ENCODE measurements at regions of chr4 and their contacts with region 1.

Region 1: GRCh38 chr4:10403633-10404445 is 53.4 kb downstream of the ZNF518B start:
- DNase-seq: peak in 2 of 9 experiments; percentile 29 to 43
- ATAC-seq: no peak
- H3K4me3 ChIP-seq: no peak overlapping the region
- H3K4me3 Mint-ChIP-seq: no peak overlapping the region
- H3K27ac ChIP-seq: no peak overlapping the region
- H3K27ac Mint-ChIP-seq: no peak overlapping the region
- H3K4me1 ChIP-seq: no peaks in the 10 kb centered on the region
- H3K4me1 Mint-ChIP-seq: no peaks in the 10 kb centered on the region
- H3K27me3 ChIP-seq: no peaks in the 10 kb centered on the region
- H3K27me3 Mint-ChIP-seq: no peaks in the 10 kb centered on the region
- CTCF ChIP-seq: peak; percentile 33

Region 2: DNA sequence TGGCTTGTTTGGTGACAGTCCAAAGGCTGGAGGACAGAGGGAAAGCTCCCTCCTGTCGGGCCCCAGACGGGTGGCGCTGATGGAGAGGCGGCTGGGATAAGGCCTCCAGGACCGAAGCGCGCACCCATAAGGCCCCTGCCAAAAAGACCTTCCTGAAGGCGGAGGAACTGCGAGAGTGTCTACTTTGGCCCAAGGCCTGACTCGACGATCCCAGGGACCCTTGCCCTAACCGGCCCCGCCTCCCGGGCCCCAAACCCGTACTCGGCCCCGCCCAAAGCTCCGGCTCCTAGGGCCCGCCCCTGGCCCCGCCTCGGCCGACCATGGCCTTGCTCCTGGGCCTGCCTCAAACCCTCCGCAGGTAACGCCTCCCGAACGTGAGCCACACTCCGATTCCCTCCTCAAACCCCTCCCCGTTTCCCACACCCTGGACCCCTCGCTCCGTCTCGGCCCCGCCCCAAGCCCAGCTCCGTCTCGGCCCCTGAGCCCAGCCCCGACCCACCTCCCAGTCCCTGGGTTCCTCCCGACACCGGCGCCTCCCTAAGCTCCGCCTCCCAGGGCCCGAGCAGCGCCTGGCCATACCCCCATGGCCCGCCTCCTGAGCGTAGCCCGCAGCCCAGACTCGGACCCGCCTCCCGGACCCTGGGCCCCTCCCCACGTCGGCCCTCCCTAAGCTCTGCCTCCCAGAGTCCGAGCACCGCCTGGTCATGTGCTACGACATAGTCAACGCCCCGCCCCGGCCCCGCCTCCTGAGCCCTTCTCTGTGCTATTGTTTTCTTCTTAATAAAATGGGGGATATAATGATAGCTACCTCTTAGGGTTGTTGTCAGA is 712.4 kb before region 1 on chr4:
- CTCF ChIA-PET with region 1: no interaction called
- POLR2A ChIA-PET with region 1: no interaction called
- intact Hi-C with region 1: loop called in 1 of 2 experiments (anchors 10 kb)
- DNase-seq: peak; percentile 79 to 96 (median 89)
- ATAC-seq: peak; percentile 99
- H3K4me3 ChIP-seq: peak overlapping the region; percentile 72 to 75
- H3K4me3 Mint-ChIP-seq: peak overlapping the region; percentile 88
- H3K27ac ChIP-seq: peak overlapping the region; percentile 55 to 76
- H3K27ac Mint-ChIP-seq: peak overlapping the region; percentile 76
- H3K4me1 ChIP-seq: peaks cover 8% of the 10 kb centered on the region
- H3K4me1 Mint-ChIP-seq: peaks cover 28% of the 10 kb centered on the region
- H3K27me3 ChIP-seq: no peaks in the 10 kb centered on the region
- H3K27me3 Mint-ChIP-seq: no peaks in the 10 kb centered on the region
- CTCF ChIP-seq: no peak

Region 3: GRCh38 chr4:10018818-10019461 is 384.9 kb before region 1 on chr4:
- CTCF ChIA-PET with region 1: interaction called, 7 read pairs
- POLR2A ChIA-PET with region 1: no interaction called
- intact Hi-C with region 1: loop called (anchors 1 to 2 kb)
- DNase-seq: peak; percentile 74 to 96 (median 93)
- ATAC-seq: peak; percentile 99
- H3K4me3 ChIP-seq: peak overlapping the region; percentile 59 to 60
- H3K4me3 Mint-ChIP-seq: peak overlapping the region; percentile 87
- H3K27ac ChIP-seq: peak overlapping the region; percentile 66 to 76
- H3K27ac Mint-ChIP-seq: peak overlapping the region; percentile 95
- H3K4me1 ChIP-seq: peaks cover 11% of the 10 kb centered on the region
- H3K4me1 Mint-ChIP-seq: peaks cover 12% of the 10 kb centered on the region
- H3K27me3 ChIP-seq: peaks cover 0 to 2% of the 10 kb centered on the region in 2 experiments
- H3K27me3 Mint-ChIP-seq: no peaks in the 10 kb centered on the region
- CTCF ChIP-seq: peak; percentile 96

Region 4: GRCh38 chr4:10164877-10165283 is 239.0 kb before region 1 on chr4:
- CTCF ChIA-PET with region 1: interaction called, 8 read pairs
- POLR2A ChIA-PET with region 1: no interaction called
- intact Hi-C with region 1: loop called in 1 of 2 experiments (anchors 5 kb)
- DNase-seq: peak in 2 of 9 experiments; percentile 17 to 19
- ATAC-seq: no peak
- H3K4me3 ChIP-seq: no peak overlapping the region
- H3K4me3 Mint-ChIP-seq: no peak overlapping the region
- H3K27ac ChIP-seq: no peak overlapping the region
- H3K27ac Mint-ChIP-seq: no peak overlapping the region
- H3K4me1 ChIP-seq: peaks cover 29% of the 10 kb centered on the region
- H3K4me1 Mint-ChIP-seq: peaks cover 33% of the 10 kb centered on the region
- H3K27me3 ChIP-seq: no peaks in the 10 kb centered on the region
- H3K27me3 Mint-ChIP-seq: no peaks in the 10 kb centered on the region
- CTCF ChIP-seq: peak; percentile 49

Region 5: GRCh38 chr4:10530137-10530786 is 126.4 kb after region 1 on chr4:
- CTCF ChIA-PET with region 1: no interaction called
- POLR2A ChIA-PET with region 1: no interaction called
- intact Hi-C with region 1: loop called in 1 of 2 experiments (anchors 10 kb)
- DNase-seq: no peak
- ATAC-seq: no peak
- H3K4me3 ChIP-seq: no peak overlapping the region
- H3K4me3 Mint-ChIP-seq: no peak overlapping the region
- H3K27ac ChIP-seq: no peak overlapping the region
- H3K27ac Mint-ChIP-seq: no peak overlapping the region
- H3K4me1 ChIP-seq: no peaks in the 10 kb centered on the region
- H3K4me1 Mint-ChIP-seq: no peaks in the 10 kb centered on the region
- H3K27me3 ChIP-seq: no peaks in the 10 kb centered on the region
- H3K27me3 Mint-ChIP-seq: no peaks in the 10 kb centered on the region
- CTCF ChIP-seq: no peak

Region 6: GRCh38 chr4:10625131-10625530 is 221.3 kb after region 1 on chr4:
- CTCF ChIA-PET with region 1: no interaction called
- POLR2A ChIA-PET with region 1: no interaction called
- intact Hi-C with region 1: no loop called
- DNase-seq: no peak
- ATAC-seq: no peak
- H3K4me3 ChIP-seq: no peak overlapping the region
- H3K4me3 Mint-ChIP-seq: no peak overlapping the region
- H3K27ac ChIP-seq: no peak overlapping the region
- H3K27ac Mint-ChIP-seq: no peak overlapping the region
- H3K4me1 ChIP-seq: peaks cover 9% of the 10 kb centered on the region
- H3K4me1 Mint-ChIP-seq: peaks cover 14% of the 10 kb centered on the region
- H3K27me3 ChIP-seq: no peaks in the 10 kb centered on the region
- H3K27me3 Mint-ChIP-seq: no peaks in the 10 kb centered on the region
- CTCF ChIP-seq: no peak